Transverse colon (tissue), 4 donors: ENCODE measurements at regions of chr18 and their contacts with region 1.

Region 1: DNA sequence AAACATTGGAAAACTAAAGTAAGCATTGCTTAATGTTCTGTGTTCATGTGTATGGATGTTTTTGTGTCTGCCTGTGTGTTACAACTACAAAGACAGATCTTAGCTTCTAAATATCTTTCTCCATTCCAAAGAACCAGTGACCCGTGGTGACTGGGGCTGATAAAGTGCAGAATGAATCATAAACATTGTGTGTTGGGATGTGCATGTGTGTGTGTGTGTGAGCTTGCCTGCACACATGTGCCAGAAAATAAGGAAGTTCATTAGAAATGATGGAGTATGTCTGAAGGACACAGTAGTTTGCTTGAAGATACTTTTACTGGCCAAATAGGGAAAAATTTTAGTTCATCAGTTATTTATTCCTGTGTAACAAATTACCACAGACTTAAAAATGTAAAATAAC is 756.6 kb upstream of the CELF4 start:
- DNase-seq: no peak
- H3K4me3 ChIP-seq: no peak overlapping the region
- H3K27ac ChIP-seq: no peak overlapping the region
- H3K4me1 ChIP-seq: no peaks in the 10 kb centered on the region
- H3K27me3 ChIP-seq: no peaks in the 10 kb centered on the region
- CTCF ChIP-seq: no peak
- EP300 ChIP-seq: no peak
- POLR2A ChIP-seq: no peak

Region 2: GRCh38 chr18:38115201-38115600 is 207.0 kb before region 1 on chr18:
- in situ Hi-C with region 1: no loop called
- intact Hi-C with region 1: loop called (anchors 5 kb)
- DNase-seq: no peak
- H3K4me3 ChIP-seq: no peak overlapping the region
- H3K27ac ChIP-seq: no peak overlapping the region
- H3K4me1 ChIP-seq: no peaks in the 10 kb centered on the region
- H3K27me3 ChIP-seq: no peaks in the 10 kb centered on the region
- CTCF ChIP-seq: no peak
- EP300 ChIP-seq: no peak
- POLR2A ChIP-seq: no peak

Region 3: GRCh38 chr18:38256366-38256765 is 65.8 kb before region 1 on chr18:
- in situ Hi-C with region 1: no loop called
- intact Hi-C with region 1: no loop called
- DNase-seq: no peak
- H3K4me3 ChIP-seq: no peak overlapping the region
- H3K27ac ChIP-seq: no peak overlapping the region
- H3K4me1 ChIP-seq: no peaks in the 10 kb centered on the region
- H3K27me3 ChIP-seq: no peaks in the 10 kb centered on the region
- CTCF ChIP-seq: no peak
- EP300 ChIP-seq: no peak
- POLR2A ChIP-seq: no peak

Region 4: DNA sequence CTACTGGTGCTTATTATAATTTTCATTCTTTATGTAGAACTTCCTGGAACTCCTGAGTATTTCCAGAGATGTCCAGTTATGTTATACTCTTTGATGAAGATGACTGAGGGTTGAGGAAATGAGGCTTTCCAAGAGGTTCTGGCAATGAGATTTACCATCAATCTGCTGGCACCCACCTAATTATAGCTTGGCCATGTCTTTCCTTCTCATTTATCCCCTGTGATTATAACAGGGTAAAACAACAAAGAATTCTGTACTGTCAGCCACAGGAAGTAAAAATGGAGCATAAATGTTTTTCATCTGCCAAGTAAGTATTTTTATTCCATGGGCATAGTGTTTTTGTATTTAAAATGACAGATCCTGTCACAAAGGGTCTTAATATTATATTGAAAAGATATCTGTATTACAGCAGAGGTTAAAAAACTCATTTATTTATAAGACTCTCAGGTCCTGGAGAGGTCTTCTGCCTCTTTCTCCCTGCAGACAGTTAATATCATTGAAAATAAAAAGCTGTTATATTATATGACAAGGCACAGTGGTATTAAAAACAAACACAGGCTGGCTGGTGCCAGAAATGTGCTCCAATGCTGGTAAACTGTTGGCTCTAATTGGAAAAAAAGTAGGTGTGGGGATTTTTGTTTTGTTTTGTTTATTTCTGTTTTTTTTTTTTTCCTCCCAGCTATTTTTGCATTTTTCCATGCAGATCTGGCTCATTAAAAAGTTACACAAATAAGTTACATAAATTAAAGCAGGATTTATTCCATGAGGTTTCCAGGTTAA is 1007.5 kb after region 1 on chr18:
- in situ Hi-C with region 1: no loop called
- intact Hi-C with region 1: no loop called
- DNase-seq: no peak
- H3K4me3 ChIP-seq: no peak overlapping the region
- H3K27ac ChIP-seq: no peak overlapping the region
- H3K4me1 ChIP-seq: no peaks in the 10 kb centered on the region
- H3K27me3 ChIP-seq: no peaks in the 10 kb centered on the region
- CTCF ChIP-seq: no peak
- EP300 ChIP-seq: no peak
- POLR2A ChIP-seq: no peak